ENCODE measurements at regions of chr1 and their contacts with region 1.

Region 1: DNA sequence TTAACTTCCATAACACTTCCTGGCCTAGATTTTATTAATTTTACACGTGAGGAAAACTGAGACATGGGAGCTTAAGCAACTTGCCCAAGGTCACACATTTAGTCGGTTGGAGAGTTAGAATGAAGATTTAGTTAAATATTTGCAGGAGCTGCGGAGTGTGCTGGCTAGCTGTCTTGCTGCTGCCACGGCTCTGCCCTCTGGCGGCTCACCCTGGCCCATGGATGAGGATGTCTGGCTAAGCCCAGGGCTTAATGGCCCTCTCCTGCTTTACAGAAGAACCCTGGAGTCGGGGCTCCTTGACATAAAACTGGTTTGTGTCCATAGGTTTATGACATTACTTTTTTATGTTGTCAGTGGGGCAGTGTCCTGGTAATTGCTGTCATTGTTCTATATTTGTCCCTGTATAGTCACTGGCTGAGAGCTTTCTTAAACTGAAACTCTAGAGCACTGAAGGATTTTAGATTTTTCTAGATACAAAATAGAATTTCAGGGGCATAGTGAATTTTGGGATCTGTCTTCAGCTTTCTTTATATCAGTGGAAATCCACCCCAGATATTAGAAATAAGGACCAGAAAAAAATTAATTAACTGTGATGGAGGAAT is 88.9 kb upstream of the WLS start:
- DNase-seq: peak; percentile 77
- ATAC-seq: peak; percentile 100
- H3K4me3 ChIP-seq: no peak overlapping the region
- H3K27ac ChIP-seq: no peak overlapping the region
- H3K4me1 ChIP-seq: no peaks in the 10 kb centered on the region
- H3K27me3 ChIP-seq: no peaks in the 10 kb centered on the region
- CTCF ChIP-seq: peak; percentile 92

Region 2: GRCh38 chr1:68081775-68082283 is 239.4 kb before region 1 on chr1:
- CTCF ChIA-PET with region 1: no interaction called
- POLR2A ChIA-PET with region 1: no interaction called
- intact Hi-C with region 1: no loop called
- DNase-seq: no peak
- ATAC-seq: no peak
- H3K4me3 ChIP-seq: no peak overlapping the region
- H3K27ac ChIP-seq: no peak overlapping the region
- H3K4me1 ChIP-seq: no peaks in the 10 kb centered on the region
- H3K27me3 ChIP-seq: no peaks in the 10 kb centered on the region
- CTCF ChIP-seq: no peak

Region 3: DNA sequence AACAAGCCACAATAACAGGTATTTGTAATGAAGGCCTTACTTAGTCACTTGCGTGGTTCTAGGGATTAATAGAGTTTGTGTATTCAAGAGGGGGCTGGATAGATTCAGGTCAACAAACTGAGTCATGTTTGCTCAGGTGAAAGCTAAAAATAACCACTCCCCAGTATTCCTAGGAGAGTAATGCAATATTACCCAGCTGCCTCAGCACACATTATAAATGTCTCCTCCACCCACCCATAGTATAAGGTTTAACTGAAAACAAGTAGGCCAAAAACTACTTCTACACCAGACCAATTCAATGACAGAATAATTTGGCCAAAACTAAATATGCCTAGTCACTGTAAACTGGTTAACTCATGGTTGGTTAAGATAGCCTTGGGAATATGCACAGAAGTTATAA is 123.3 kb before region 1 on chr1:
- CTCF ChIA-PET with region 1: interaction called, 4 read pairs
- POLR2A ChIA-PET with region 1: no interaction called
- intact Hi-C with region 1: loop called (anchors 1 kb)
- DNase-seq: peak; percentile 94
- ATAC-seq: peak; percentile 96
- H3K4me3 ChIP-seq: peak overlapping the region; percentile 19; the same call in 1 of the 2 replicates
- H3K27ac ChIP-seq: peak overlapping the region; percentile 93
- H3K4me1 ChIP-seq: peaks cover 47% of the 10 kb centered on the region
- H3K27me3 ChIP-seq: no peaks in the 10 kb centered on the region
- CTCF ChIP-seq: no peak

Region 4: GRCh38 chr1:68232354-68233148 is 88.6 kb before region 1 on chr1 and contains the start of gene WLS:
- CTCF ChIA-PET with region 1: no interaction called
- POLR2A ChIA-PET with region 1: no interaction called
- intact Hi-C with region 1: loop called (anchors 5 kb)
- DNase-seq: peak; percentile 66
- ATAC-seq: peak; percentile 75
- H3K4me3 ChIP-seq: peak within 1 kb of the TSS; percentile 93
- H3K27ac ChIP-seq: no peak within 1 kb of the TSS
- H3K4me1 ChIP-seq: peaks cover 25% of the 10 kb centered on the region; the same call in 1 of the 2 replicates
- H3K27me3 ChIP-seq: no peaks in the 10 kb centered on the region
- CTCF ChIP-seq: no peak
- total RNA-seq, gene WLS: 15.3 and 19.1 TPM in 2 replicates

Region 5: DNA sequence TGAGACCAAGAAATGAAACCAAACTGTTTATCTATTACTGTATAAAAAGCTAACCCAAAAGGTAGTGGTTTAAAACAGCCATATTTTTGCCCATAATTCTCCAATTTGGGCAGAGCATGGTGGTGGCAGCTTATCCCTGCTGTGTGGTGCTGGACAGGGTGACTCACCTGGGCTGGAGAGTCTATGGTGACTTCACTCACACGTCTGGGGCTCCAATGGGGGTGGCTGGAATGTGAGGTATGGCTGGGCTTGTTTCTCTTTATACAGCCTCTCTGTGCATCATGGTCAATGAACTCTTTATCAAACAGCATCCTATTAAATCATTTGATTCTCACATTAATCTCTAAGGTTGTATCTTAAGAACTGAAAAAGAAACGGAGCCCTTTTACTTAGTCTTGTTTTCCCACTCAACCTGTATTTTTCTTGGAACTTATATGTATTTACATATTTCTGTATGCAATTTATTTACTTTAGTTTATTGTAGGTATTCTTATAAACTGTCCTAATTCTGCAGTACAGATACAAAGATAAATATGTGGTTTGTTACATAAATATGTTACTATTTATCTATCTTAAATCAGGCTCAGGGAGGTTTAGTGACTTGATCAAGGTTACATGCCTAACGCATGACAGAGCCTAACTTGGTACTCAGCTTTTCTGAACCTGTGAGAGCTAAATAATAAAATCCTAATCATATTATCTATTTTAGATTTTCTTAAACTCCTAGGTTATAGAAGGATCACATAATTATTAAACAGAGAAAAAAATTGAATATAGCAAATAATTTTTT is 51.4 kb before region 1 on chr1:
- CTCF ChIA-PET with region 1: no interaction called
- POLR2A ChIA-PET with region 1: no interaction called
- intact Hi-C with region 1: loop called (anchors 2 kb)
- DNase-seq: peak; percentile 81
- ATAC-seq: peak; percentile 99
- H3K4me3 ChIP-seq: peak overlapping the region; percentile 9; the same call in 1 of the 2 replicates
- H3K27ac ChIP-seq: peak overlapping the region; percentile 45
- H3K4me1 ChIP-seq: peaks cover 22% of the 10 kb centered on the region
- H3K27me3 ChIP-seq: no peaks in the 10 kb centered on the region
- CTCF ChIP-seq: no peak

Region 6: DNA sequence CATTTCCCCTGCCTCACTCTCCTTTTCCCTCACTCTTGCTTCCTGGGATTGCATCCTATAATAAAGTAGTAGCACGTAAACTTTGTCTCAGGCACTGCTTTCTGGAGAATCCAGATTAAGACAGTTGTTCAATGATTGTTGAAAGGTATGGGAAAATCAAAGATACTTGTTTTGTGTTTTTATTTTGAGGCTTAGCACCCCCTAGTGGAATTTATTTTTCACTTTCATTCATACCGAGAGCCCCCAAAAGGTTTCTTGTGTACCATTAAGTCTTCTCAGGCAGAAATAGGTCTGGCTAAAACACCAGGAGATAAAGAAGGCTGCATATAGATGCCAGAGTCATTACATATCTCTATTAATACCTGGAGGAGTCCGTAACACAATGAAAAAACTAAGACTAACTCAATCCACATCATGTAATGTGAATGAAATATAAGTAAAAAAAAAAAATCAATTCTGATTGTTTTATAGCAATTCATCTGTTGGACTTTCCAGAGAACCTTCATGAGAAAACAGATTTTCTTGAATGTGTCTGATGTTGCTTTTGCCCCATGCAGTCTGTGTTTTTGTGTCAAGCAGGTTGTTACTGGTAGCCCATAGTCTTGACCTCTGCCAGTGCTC is 25.1 kb after region 1 on chr1:
- CTCF ChIA-PET with region 1: interaction called, 3 read pairs
- POLR2A ChIA-PET with region 1: interaction called, 3 read pairs
- intact Hi-C with region 1: loop called (anchors 1 kb)
- DNase-seq: peak; percentile 58
- ATAC-seq: 0 out of 2 replicates have a peak, but pooled peaks have one; percentile 22
- H3K4me3 ChIP-seq: no peak overlapping the region
- H3K27ac ChIP-seq: no peak overlapping the region
- H3K4me1 ChIP-seq: no peaks in the 10 kb centered on the region
- H3K27me3 ChIP-seq: 0 out of 2 replicates have a peak, but pooled peaks cover 4% of the 10 kb centered on the region
- CTCF ChIP-seq: peak; percentile 80

Region 7: DNA sequence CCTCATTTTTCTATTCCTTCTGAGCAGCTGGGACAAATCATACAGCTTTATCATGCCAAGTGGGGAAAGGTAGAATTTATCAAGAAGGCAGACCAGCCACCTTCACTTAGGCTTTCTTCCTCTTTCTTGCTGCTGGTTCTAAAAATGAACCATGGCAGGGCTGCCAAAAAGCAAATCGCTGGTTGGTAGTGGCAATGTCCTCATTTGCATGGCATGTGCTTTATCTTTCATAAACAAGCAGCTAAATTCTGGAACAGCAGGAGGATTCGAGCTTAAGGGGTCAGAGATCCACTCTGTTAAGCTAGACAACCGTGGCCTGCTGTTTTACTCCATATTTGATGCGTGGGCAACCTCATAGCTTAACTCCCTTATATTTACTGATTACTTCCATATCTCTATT is 37.3 kb after region 1 on chr1:
- CTCF ChIA-PET with region 1: no interaction called
- POLR2A ChIA-PET with region 1: no interaction called
- intact Hi-C with region 1: no loop called
- DNase-seq: no peak
- ATAC-seq: no peak
- H3K4me3 ChIP-seq: no peak overlapping the region
- H3K27ac ChIP-seq: no peak overlapping the region
- H3K4me1 ChIP-seq: no peaks in the 10 kb centered on the region
- H3K27me3 ChIP-seq: no peaks in the 10 kb centered on the region
- CTCF ChIP-seq: no peak

Region 8: GRCh38 chr1:68384321-68384813 is 63.2 kb after region 1 on chr1:
- CTCF ChIA-PET with region 1: no interaction called
- POLR2A ChIA-PET with region 1: no interaction called
- intact Hi-C with region 1: loop called (anchors 2 kb)
- DNase-seq: peak; percentile 98
- ATAC-seq: peak; percentile 76
- H3K4me3 ChIP-seq: peak overlapping the region; percentile 60
- H3K27ac ChIP-seq: peak overlapping the region; percentile 100
- H3K4me1 ChIP-seq: peaks cover 40% of the 10 kb centered on the region
- H3K27me3 ChIP-seq: no peaks in the 10 kb centered on the region
- CTCF ChIP-seq: peak; percentile 68